Transverse colon (tissue), 4 donors: ENCODE measurements at regions of chr13 and their contacts with region 1.

Region 1: DNA sequence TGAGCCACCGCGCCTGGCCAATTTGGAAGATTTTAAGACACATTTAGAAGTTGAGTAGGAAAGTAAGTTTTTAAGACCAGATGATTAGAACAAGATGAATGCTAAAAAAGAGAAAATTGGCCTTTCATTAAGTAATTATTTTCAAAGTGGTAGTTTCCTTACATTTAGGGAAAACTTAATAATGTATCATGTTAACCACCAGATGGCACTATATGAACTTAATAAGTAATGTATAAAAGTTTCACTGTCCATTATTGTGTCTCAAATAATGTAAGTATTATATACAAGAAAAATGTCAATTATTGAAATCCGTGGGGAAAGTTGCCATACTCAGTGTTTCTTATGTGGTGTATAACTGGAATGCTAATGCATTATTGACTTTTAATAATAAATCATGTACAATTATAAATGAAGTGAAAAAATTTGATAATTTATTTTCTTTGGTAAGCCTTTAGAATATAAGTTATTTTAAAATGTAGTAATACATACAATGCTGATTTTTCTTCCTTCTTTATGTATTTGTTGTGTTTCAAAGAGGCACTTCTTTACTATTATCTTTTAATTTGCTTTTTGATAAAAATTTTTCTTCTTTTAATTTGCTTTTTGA is 29.2 kb downstream of the COG6 start:
- DNase-seq: no peak
- H3K4me3 ChIP-seq: no peak overlapping the region
- H3K27ac ChIP-seq: no peak overlapping the region
- H3K4me1 ChIP-seq: peaks cover 0 to 3% (median 0%) of the 10 kb centered on the region in 4 donors
- H3K27me3 ChIP-seq: no peaks in the 10 kb centered on the region
- CTCF ChIP-seq: peak; percentile 36 to 49 (median 42)
- EP300 ChIP-seq: no peak
- POLR2A ChIP-seq: no peak

Region 2: DNA sequence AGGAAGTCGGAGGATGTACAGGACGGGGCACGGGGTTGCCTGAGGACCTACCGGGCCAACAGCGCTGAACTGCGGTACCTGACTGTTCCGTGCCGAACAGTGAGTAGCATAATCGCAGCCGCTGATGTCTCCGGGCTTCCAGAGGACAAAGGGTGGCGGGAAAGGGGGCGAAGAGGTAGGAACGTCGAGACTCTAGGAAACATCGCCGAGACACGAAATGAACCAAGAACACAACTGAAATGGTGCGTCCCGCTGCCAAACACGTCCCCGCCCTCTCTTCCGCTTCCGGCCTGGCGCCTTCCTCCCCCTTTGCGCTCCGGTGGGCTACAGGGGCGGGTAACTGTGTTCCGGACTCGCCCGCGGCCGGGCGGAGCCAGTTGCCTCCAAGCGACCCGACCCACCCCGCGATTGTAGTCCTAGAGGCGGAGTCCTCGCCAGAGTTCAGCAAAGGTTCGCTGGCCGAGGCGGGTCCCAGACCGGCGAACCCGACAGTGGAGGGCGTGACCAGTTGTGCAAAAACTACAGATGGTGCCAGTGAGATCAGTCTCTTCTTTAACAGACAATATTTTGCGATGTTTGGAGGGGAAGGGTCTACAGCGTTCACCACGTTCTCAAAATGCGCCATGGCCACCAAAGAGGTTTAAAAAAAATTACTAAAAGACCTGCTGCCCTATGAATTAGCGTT is 1086.4 kb after region 1 on chr13 and contains the start of gene MRPS31:
- in situ Hi-C with region 1: no loop called
- intact Hi-C with region 1: loop called (anchors 10 kb)
- DNase-seq: peak; percentile 97
- H3K4me3 ChIP-seq: peak within 1 kb of the TSS; percentile 57 to 80 (median 58)
- H3K27ac ChIP-seq: peak within 1 kb of the TSS; percentile 84 to 91 (median 88)
- H3K4me1 ChIP-seq: peaks cover 7 to 23% (median 10%) of the 10 kb centered on the region in 4 donors
- H3K27me3 ChIP-seq: no peaks in the 10 kb centered on the region
- CTCF ChIP-seq: peak in 1 of 5 experiments; percentile 5
- EP300 ChIP-seq: no peak
- POLR2A ChIP-seq: peak; percentile 66
- total RNA-seq, gene MRPS31: 16.1 to 50.2 (median 25.0) TPM